WTC11 (cell line): ENCODE measurements at regions of chr6 and their contacts with region 1.

Region 1: GRCh38 chr6:41787219-41787917 is at the start of gene TOMM6:
- DNase-seq: peak; percentile 96
- ATAC-seq: peak; percentile 74
- H3K4me3 Mint-ChIP-seq: peak within 1 kb of the TSS; percentile 96
- H3K27ac Mint-ChIP-seq: peak within 1 kb of the TSS; percentile 97
- H3K4me1 Mint-ChIP-seq: peaks cover 22% of the 10 kb centered on the region
- H3K27me3 Mint-ChIP-seq: peaks cover 38% of the 10 kb centered on the region
- CTCF ChIP-seq: peak; percentile 96
- total RNA-seq, gene TOMM6: 219 to 233 TPM (median 228 TPM) in 3 replicates

Region 2: GRCh38 chr6:41735427-41736356 is 51.7 kb before region 1 on chr6 and contains the start of gene TFEB:
- CTCF ChIA-PET with region 1: interaction called, 51 read pairs
- POLR2A ChIA-PET with region 1: interaction called, 7 read pairs
- DNase-seq: peak; percentile 94
- ATAC-seq: peak; percentile 52
- H3K4me3 Mint-ChIP-seq: peak within 1 kb of the TSS; percentile 67
- H3K27ac Mint-ChIP-seq: 0 out of 2 replicates have a peak within 1 kb of the TSS, but pooled peaks have one; percentile 63
- H3K4me1 Mint-ChIP-seq: peaks cover 27% of the 10 kb centered on the region
- H3K27me3 Mint-ChIP-seq: peaks cover 18% of the 10 kb centered on the region
- CTCF ChIP-seq: peak; percentile 72
- total RNA-seq, gene TFEB: 3.1 to 3.9 TPM (median 3.3 TPM) in 3 replicates

Region 3: GRCh38 chr6:41801380-41801779 is 14.0 kb after region 1 on chr6:
- CTCF ChIA-PET with region 1: interaction called, 19 read pairs
- POLR2A ChIA-PET with region 1: no interaction called
- DNase-seq: no peak
- ATAC-seq: peak; percentile 60
- H3K4me3 Mint-ChIP-seq: no peak overlapping the region
- H3K27ac Mint-ChIP-seq: no peak overlapping the region
- H3K4me1 Mint-ChIP-seq: no peaks in the 10 kb centered on the region
- H3K27me3 Mint-ChIP-seq: no peaks in the 10 kb centered on the region
- CTCF ChIP-seq: no peak

Region 4: GRCh38 chr6:41936073-41936837 is 148.9 kb after region 1 on chr6:
- CTCF ChIA-PET with region 1: interaction called, 27 read pairs
- POLR2A ChIA-PET with region 1: interaction called, 3 read pairs
- DNase-seq: peak; percentile 61
- ATAC-seq: peak; percentile 49
- H3K4me3 Mint-ChIP-seq: no peak overlapping the region
- H3K27ac Mint-ChIP-seq: 0 out of 2 replicates have a peak overlapping the region, but pooled peaks have one; percentile 78
- H3K4me1 Mint-ChIP-seq: peaks cover 26% of the 10 kb centered on the region
- H3K27me3 Mint-ChIP-seq: no peaks in the 10 kb centered on the region
- CTCF ChIP-seq: peak; percentile 77

Region 5: GRCh38 chr6:42043787-42044475 is 256.6 kb after region 1 on chr6:
- CTCF ChIA-PET with region 1: interaction called, 71 read pairs
- POLR2A ChIA-PET with region 1: interaction called, 8 read pairs
- DNase-seq: peak; percentile 96
- ATAC-seq: peak; percentile 78
- H3K4me3 Mint-ChIP-seq: peak overlapping the region; percentile 38; the same call in 1 of the 2 replicates
- H3K27ac Mint-ChIP-seq: no peak overlapping the region
- H3K4me1 Mint-ChIP-seq: peaks cover 42% of the 10 kb centered on the region
- H3K27me3 Mint-ChIP-seq: peaks cover 82% of the 10 kb centered on the region
- CTCF ChIP-seq: peak; percentile 97